Right ventricle myocardium inferior (tissue), 1 donor: ENCODE measurements at regions of chr6 and their contacts with region 1.

Region 1: GRCh38 chr6:116881236-116881635 is 4.2 kb downstream of the RFX6 start:
- DNase-seq: no peak
- ATAC-seq: no peak

Region 2: DNA sequence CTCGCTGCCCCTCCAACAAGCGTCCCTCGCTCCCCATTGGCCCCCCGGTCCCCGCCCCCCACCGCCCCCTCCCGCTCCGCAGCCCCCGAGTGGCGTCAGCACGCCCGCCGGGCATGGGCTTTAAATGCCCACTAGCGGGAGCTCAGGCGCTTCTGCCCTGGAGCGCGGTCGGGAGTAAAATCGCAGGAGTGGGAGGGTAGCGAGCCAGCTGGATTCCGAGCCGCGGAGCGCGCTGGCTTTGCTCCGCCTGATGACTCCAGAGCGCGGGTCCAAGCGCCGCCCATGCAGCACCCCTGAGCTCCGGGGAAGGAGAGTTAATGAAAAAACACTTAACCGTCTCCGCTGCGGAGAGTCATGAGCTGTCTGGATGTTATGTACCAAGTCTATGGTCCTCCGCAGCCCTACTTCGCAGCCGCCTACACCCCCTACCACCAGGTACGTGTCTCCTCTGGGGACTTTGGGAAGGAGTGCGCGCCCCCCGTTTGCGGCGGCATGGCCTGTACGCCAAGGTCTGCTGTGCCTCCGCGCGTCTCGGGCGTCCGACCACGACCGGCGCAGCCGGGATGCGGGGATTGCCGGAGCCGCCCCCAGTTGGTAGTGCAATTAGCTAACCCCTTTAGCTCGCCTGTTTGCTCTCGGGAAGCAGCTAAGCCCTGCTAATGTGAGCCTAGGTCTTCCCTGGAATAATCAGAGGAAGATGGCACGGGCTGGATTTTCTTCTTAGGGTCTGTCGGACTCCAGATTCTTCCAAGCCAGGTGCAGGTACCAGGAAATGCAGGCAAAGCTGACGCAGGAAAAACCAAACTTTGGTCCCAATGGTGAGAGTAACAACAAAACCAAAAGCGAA is 384.4 kb after region 1 on chr6 and contains the start of gene VGLL2:
- intact Hi-C with region 1: loop called (anchors 5 kb)
- DNase-seq: peak; percentile 64
- ATAC-seq: peak; percentile 74
- total RNA-seq, gene VGLL2: not detected